GM12878 (cell line): ENCODE measurements at regions of chr11 and their contacts with region 1.

Region 1: GRCh38 chr11:26297189-26297975 is 34.5 kb upstream of the ANO3 start:
- DNase-seq: no peak
- ATAC-seq: peak; percentile 92
- H3K4me3 ChIP-seq: no peak overlapping the region
- H3K27ac ChIP-seq: no peak overlapping the region
- H3K4me1 ChIP-seq: no peaks in the 10 kb centered on the region
- H3K27me3 ChIP-seq: no peaks in the 10 kb centered on the region
- CTCF ChIP-seq: peak; percentile 56 to 73 (median 67)
- EP300 ChIP-seq: no peak
- POLR2A ChIP-seq: no peak
- RAD21 ChIP-seq: peak; percentile 79

Region 2: DNA sequence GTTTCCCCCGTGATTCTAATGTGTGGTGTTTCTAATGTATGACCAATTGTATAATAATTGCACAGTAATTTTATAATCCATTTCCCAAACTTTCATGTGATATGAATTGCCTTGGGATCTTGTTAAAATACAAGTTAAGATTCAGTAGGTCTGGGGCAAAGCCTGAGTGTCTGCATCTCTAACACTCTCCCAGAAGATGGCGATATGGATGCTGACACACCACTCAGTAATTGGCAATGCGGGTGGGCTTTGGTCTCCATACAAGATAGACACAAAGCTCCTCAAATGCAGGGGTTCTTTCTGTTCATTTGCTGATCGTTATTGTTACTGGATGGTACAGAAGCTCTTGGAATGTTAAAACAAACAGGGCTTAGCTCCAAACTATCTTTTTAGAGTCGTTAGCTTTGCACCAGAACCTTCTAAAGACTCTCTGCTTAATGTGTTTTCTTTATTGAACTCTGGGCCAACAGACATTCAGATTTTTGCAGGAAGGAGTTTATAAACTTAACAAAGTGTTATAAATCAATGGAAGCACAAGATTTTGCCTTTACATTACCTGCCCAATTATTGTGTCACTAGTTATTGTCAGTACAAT is 10.8 kb before region 1 on chr11:
- CTCF ChIA-PET with region 1: interaction called, 17 read pairs
- POLR2A ChIA-PET with region 1: no interaction called
- RAD21 ChIA-PET with region 1: interaction called, 5 read pairs
- SMC1A ChIA-PET with region 1: interaction called, 8 read pairs
- in situ Hi-C with region 1: no loop called
- intact Hi-C with region 1: no loop called
- DNase-seq: no peak
- ATAC-seq: peak; percentile 82
- H3K4me3 ChIP-seq: no peak overlapping the region
- H3K27ac ChIP-seq: no peak overlapping the region
- H3K4me1 ChIP-seq: no peaks in the 10 kb centered on the region
- H3K27me3 ChIP-seq: no peaks in the 10 kb centered on the region
- CTCF ChIP-seq: peak; percentile 34 to 56 (median 52); a peak in 3 of 6 replicates
- EP300 ChIP-seq: no peak
- POLR2A ChIP-seq: no peak
- RAD21 ChIP-seq: peak; percentile 33; the same call in 1 of the 2 replicates

Region 3: DNA sequence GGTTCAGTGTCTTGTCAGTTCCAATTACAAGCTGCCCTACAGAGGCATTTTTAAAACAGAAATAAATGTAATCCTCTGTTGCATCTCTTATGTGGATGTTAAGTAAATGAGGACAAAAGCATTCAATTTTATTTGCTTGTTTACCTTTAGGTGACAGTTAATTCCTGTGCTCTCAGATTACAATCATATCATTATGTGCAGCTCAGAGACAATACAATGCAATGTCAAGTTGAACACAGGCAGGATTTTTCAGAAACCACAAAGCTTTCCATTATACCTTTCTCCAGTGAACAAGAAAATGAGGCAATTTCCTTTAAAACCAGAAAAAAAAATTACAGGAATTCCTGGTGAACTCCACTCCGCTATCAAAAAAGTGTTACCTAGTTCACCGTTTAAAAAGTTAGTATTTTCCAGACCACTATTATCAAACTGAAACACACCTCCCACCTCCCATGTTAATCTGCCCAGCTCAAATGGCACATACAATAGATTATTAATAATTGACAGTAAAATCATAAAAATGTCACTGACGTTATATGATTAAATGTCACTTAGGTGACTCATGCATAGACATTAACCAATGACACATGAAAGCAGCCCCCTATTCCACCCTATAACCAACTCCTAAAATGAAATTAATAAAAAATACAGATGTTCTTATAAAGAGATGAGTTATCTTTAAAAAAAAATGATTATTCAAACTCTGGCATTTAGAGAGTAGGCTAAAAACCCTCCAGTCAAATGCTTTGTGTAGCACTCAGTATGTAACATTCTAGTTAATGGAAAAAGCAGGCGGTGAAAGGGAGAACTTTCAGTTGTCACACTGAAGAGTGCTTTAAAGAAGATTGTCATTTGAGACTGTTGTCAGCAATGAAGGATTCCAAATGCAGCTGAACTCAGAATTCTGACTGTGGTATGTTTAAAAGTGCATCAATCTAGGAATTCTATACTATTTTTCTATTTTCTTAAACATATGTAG is 176.1 kb after region 1 on chr11:
- CTCF ChIA-PET with region 1: interaction called, 6 read pairs
- POLR2A ChIA-PET with region 1: no interaction called
- RAD21 ChIA-PET with region 1: interaction called, 4 read pairs
- SMC1A ChIA-PET with region 1: interaction called, 23 read pairs
- in situ Hi-C with region 1: no loop called
- intact Hi-C with region 1: no loop called
- DNase-seq: no peak
- ATAC-seq: peak; percentile 39
- H3K4me3 ChIP-seq: no peak overlapping the region
- H3K27ac ChIP-seq: no peak overlapping the region
- H3K4me1 ChIP-seq: no peaks in the 10 kb centered on the region
- H3K27me3 ChIP-seq: no peaks in the 10 kb centered on the region
- CTCF ChIP-seq: no peak
- EP300 ChIP-seq: no peak
- POLR2A ChIP-seq: no peak
- RAD21 ChIP-seq: no peak

Region 4: DNA sequence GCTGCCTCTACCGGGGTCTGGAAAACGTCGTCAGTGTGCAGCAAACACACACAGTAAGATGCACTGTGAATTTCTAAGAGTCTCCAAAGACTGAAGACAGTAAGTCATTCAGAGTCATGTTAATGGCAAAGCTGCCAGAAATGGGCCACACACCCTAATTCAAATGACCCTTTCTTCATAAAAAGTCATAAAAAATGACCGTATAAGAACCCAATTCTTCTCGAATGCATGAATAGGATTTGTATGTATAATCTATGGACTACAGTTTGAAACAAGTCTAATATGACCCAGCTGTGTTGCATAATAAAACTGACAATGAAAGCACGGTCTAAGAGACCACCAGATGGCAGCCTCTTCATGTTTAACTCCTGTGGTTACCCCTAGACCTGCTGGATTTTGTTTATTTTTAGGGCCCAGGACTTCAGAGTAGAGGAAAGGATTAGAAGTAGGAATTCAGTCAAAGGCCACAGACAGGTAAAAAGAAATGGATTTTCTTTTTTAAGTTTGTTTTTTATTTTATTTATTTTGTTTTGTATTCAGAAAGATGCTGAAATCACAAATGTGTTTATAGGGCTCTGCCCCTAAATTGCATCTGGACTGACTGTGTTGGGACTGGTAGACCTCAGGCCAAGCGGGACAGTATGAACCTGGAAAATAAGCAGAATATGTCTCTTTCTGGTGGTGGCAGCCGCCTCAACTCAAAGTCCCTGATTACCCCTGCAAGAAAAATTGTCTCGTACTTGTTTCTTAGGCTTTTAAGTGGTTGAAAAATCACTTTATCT is 456.5 kb after region 1 on chr11:
- CTCF ChIA-PET with region 1: interaction called, 6 read pairs
- POLR2A ChIA-PET with region 1: no interaction called
- RAD21 ChIA-PET with region 1: interaction called, 5 read pairs
- SMC1A ChIA-PET with region 1: interaction called, 3 read pairs
- in situ Hi-C with region 1: no loop called
- intact Hi-C with region 1: loop called (anchors 2 kb)
- DNase-seq: no peak
- ATAC-seq: peak; percentile 94
- H3K4me3 ChIP-seq: no peak overlapping the region
- H3K27ac ChIP-seq: no peak overlapping the region
- H3K4me1 ChIP-seq: no peaks in the 10 kb centered on the region
- H3K27me3 ChIP-seq: 0 out of 4 replicates have a peak, but pooled peaks cover 0 to 2% of the 10 kb centered on the region in 2 experiments
- CTCF ChIP-seq: peak; percentile 34 to 56 (median 51); a peak in 4 of 6 replicates
- EP300 ChIP-seq: no peak
- POLR2A ChIP-seq: no peak
- RAD21 ChIP-seq: peak; percentile 68

Region 5: GRCh38 chr11:27158722-27159679 is 861.6 kb after region 1 on chr11:
- CTCF ChIA-PET with region 1: interaction called, 46 read pairs
- POLR2A ChIA-PET with region 1: no interaction called
- RAD21 ChIA-PET with region 1: interaction called, 6 read pairs
- SMC1A ChIA-PET with region 1: interaction called, 29 read pairs
- in situ Hi-C with region 1: loop called (anchors 5 kb)
- intact Hi-C with region 1: no loop called
- DNase-seq: no peak
- ATAC-seq: peak; percentile 82
- H3K4me3 ChIP-seq: no peak overlapping the region
- H3K27ac ChIP-seq: no peak overlapping the region
- H3K4me1 ChIP-seq: no peaks in the 10 kb centered on the region
- H3K27me3 ChIP-seq: no peaks in the 10 kb centered on the region
- CTCF ChIP-seq: peak; percentile 62 to 75 (median 62); a peak in 5 of 6 replicates
- EP300 ChIP-seq: no peak
- POLR2A ChIP-seq: no peak
- RAD21 ChIP-seq: peak; percentile 89

Region 6: DNA sequence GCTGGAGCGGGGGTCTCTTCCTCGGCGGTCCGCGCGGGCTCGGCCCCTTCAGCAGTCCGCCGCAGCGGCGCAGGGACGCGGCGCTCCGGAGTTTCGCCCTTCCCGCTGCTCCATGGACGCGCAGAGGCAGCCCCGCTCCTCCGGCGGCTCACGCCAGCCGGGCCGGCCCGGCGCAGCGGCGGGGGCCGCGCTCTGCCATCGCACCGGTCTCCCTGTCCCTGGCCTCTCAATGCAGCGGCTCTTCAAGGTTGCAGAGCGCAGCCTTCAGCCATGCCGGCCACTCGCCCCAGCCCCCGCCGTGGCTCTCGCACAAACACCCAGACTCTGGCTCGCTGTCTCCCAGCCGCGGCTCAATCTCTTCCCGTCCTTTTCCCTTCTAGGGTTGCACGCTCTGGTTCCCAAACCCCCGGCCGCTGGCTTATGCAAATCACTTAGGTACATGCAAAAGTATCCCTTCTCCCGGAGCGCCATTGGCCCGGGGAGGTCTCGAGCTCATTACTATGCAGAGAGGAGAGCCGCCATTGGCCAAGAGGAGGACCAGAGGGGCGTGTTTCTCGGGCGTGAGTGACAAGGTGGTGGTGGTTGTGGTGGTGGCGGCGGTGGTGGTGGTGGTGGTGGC is 1175.1 kb after region 1 on chr11 and contains the start of gene LGR4:
- CTCF ChIA-PET with region 1: no interaction called
- POLR2A ChIA-PET with region 1: no interaction called
- RAD21 ChIA-PET with region 1: no interaction called
- SMC1A ChIA-PET with region 1: no interaction called
- in situ Hi-C with region 1: loop called (anchors 10 kb)
- intact Hi-C with region 1: no loop called
- DNase-seq: no peak
- ATAC-seq: peak; percentile 88
- H3K4me3 ChIP-seq: peak within 1 kb of the TSS; percentile 67; the same call in 1 of the 2 replicates
- H3K27ac ChIP-seq: no peak within 1 kb of the TSS
- H3K4me1 ChIP-seq: 0 out of 2 replicates have a peak, but pooled peaks cover 3% of the 10 kb centered on the region
- H3K27me3 ChIP-seq: peaks cover 3% of the 10 kb centered on the region in 2 experiments; a peak in 2 of 4 replicates
- CTCF ChIP-seq: no peak
- EP300 ChIP-seq: no peak
- POLR2A ChIP-seq: no peak
- RAD21 ChIP-seq: no peak
- polyA plus RNA-seq, gene LGR4: not detected